HEK293 (cell line): ENCODE measurements at regions of chr12 and their contacts with region 1.

Region 1: DNA sequence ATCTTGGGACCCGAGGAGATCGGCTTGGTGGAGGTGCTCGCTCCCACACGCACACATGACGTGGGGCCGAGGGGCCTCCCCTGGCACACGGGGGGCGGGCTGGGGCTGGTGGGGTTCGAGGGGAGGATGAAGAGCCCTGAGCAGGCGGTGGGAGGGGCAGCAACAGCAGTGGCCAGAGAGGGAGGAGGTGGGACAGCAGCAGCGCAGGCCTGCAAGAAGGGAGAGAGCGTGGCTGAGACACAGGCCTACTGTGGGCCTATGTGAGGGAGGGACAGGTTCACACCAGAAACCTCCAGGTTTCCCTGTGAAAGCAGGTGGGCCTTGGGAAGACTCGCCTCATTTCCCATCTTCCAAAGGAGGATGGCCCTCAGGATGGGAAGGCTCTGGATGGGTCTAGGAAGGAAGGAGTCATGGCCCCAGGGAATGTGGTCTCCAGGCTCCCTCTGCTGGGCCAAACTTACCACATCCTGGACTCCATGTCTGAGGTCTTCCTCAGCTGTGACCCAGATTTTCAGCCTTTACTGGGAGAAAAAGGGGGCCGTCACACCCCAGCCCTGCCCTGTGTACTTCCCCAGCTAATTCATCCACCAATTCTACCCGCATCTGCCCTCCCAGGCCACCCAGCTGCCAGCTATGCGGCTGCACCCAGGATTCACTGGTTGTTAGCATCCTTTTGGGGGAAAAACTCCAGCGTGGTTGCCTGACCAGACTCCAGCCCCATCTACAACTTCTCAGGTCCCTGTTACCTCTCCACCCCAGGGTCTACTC is 2.8 kb downstream of the PIANP start:
- H3K4me3 ChIP-seq: no peak overlapping the region
- H3K27ac ChIP-seq: no peak overlapping the region
- H3K4me1 ChIP-seq: no peaks in the 10 kb centered on the region
- CTCF ChIP-seq: peak; percentile 85

Region 2: DNA sequence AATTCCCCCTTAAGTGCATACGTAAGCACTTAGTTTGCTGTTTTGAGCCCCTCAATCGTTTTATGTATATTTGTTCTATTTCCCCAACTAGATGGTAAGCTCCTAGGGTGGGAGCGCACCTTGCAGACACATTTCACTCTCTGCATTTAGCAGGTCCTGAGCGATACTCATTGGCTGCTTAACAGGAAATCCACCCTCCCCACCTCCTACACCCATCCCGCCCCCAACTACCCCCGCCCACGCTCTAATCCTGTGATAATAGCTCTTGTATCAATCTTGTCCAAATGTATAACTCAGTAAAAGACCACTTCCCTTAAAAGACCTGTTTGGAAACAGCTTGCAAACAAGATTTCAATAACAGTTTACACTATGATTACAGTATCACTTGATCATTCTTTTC is 70.2 kb before region 1 on chr12:
- CTCF ChIA-PET with region 1: no interaction called
- POLR2A ChIA-PET with region 1: interaction called, 12 read pairs
- H3K4me3 ChIP-seq: no peak overlapping the region
- H3K27ac ChIP-seq: no peak overlapping the region
- H3K4me1 ChIP-seq: no peaks in the 10 kb centered on the region
- CTCF ChIP-seq: no peak